ENCODE measurements at regions of chr2 and their contacts with region 1.

Region 1: GRCh38 chr2:10122386-10123280 is at the start of gene RRM2:
- DNase-seq: peak; percentile 91
- ATAC-seq: peak; percentile 81
- H3K4me3 ChIP-seq: peak within 1 kb of the TSS; percentile 86 to 96
- H3K27ac ChIP-seq: peak within 1 kb of the TSS; percentile 80
- H3K4me1 ChIP-seq: peaks cover 18 to 45% of the 10 kb centered on the region in 2 experiments; a peak in 3 of 4 replicates
- H3K27me3 ChIP-seq: no peaks in the 10 kb centered on the region
- CTCF ChIP-seq: no peak
- POLR2A ChIP-seq: peak; percentile 95
- RAD21 ChIP-seq: no peak
- total RNA-seq, gene RRM2: 330 TPM

Region 2: DNA sequence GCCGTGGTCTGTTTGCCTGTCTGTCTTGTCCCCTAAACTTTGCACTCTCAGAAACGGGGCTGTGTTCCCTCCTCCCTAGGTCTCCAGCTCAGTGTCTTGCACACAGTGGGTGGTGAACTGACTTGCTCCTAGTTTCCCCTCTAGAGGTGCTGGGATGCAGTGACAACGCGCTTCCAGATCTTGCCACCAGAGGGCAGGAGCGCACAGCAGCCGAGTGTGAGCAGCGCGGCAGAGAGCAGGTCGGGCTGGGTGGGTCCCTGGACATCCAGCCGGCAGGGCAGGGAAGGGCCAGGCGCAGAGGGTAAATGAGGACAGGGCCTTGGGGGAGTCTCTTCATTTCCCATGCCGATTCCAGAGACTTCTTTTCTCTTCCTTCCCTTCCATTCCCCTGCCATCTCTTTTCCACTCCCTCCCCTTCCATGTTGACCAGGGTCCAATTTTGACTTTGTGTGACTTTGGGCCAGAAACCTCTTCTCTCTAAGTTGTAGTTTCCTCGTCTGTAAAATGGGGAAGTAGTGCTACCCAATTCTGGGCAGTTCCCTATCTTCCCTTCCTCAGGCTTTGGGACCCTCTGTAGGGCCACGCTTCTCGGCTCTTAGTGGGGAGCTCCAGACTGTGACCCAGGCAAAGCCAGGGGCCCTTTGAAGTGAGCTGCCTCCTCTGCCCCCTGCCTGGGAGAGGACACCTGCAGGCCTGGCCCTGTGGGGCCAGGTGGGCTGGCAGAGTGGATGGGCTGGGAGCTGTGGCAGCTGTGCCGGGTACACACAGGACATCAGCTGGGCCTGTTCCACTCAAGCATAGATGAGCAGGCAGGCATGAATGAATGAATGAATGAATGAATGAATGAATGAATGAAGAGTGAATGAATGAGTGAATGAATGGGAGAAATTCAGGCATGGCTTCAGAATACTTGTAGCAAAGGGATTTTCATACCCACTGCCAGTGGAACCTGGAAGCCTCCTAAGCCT is 322.7 kb before region 1 on chr2:
- CTCF ChIA-PET with region 1: no interaction called
- POLR2A ChIA-PET with region 1: no interaction called
- RAD21 ChIA-PET with region 1: no interaction called
- intact Hi-C with region 1: loop called (anchors 2 kb)
- DNase-seq: peak; percentile 72
- ATAC-seq: peak; percentile 84
- H3K4me3 ChIP-seq: no peak overlapping the region
- H3K27ac ChIP-seq: peak overlapping the region; percentile 75; the same call in 1 of the 2 replicates
- H3K4me1 ChIP-seq: peaks cover 31 to 48% of the 10 kb centered on the region in 2 experiments
- H3K27me3 ChIP-seq: no peaks in the 10 kb centered on the region
- CTCF ChIP-seq: peak in 2 of 3 experiments; percentile 97 to 99; a peak in 4 of 6 replicates
- POLR2A ChIP-seq: no peak
- RAD21 ChIP-seq: no peak

Region 3: DNA sequence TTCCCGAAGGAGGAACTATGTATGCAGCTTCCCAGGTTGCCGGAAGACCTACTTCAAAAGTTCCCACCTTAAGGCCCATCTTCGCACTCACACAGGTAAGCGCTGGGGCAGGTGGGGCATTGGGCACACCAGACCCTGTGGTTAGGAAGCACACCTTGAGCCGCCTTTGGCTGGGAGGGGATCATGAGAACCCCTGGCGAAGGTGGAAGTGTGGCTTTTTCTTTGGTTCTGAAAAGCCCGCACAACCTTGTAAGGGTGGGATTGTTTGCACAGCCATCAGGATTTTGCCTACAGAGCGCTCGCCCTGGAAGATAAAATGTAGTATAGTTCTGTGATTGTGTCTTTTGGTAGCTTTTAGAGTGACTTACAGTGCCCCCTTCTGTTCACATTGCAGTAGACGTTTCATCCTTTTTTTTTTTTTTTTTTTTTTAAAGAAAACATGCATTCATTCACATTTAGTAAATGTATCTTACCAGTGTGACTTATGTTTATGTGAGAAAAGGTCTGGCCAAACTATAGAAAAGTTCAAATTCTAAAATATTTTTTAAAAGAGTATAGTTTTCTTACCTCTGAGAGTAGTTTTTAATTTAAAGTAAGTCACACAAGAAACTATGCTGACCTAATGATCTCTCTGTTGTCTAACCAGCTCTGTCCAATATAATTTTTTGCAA is 74.0 kb before region 1 on chr2:
- CTCF ChIA-PET with region 1: no interaction called
- POLR2A ChIA-PET with region 1: no interaction called
- RAD21 ChIA-PET with region 1: no interaction called
- intact Hi-C with region 1: no loop called
- DNase-seq: peak; percentile 10
- ATAC-seq: no peak
- H3K4me3 ChIP-seq: no peak overlapping the region
- H3K27ac ChIP-seq: no peak overlapping the region
- H3K4me1 ChIP-seq: peaks cover 3 to 9% of the 10 kb centered on the region in 2 experiments; a peak in 1 of 4 replicates
- H3K27me3 ChIP-seq: no peaks in the 10 kb centered on the region
- CTCF ChIP-seq: peak; percentile 48 to 79 (median 75)
- POLR2A ChIP-seq: no peak
- RAD21 ChIP-seq: peak; percentile 84

Region 4: GRCh38 chr2:10072656-10073480 is 49.8 kb before region 1 on chr2:
- CTCF ChIA-PET with region 1: interaction called, 22 read pairs
- POLR2A ChIA-PET with region 1: no interaction called
- RAD21 ChIA-PET with region 1: interaction called in 1 of 2 experiments, 6 read pairs
- intact Hi-C with region 1: no loop called
- DNase-seq: peak; percentile 69
- ATAC-seq: peak; percentile 98
- H3K4me3 ChIP-seq: no peak overlapping the region
- H3K27ac ChIP-seq: no peak overlapping the region
- H3K4me1 ChIP-seq: peaks cover 0 to 8% of the 10 kb centered on the region in 2 experiments; a peak in 2 of 4 replicates
- H3K27me3 ChIP-seq: no peaks in the 10 kb centered on the region
- CTCF ChIP-seq: peak; percentile 86 to 93 (median 92)
- POLR2A ChIP-seq: no peak
- RAD21 ChIP-seq: peak; percentile 92

Region 5: DNA sequence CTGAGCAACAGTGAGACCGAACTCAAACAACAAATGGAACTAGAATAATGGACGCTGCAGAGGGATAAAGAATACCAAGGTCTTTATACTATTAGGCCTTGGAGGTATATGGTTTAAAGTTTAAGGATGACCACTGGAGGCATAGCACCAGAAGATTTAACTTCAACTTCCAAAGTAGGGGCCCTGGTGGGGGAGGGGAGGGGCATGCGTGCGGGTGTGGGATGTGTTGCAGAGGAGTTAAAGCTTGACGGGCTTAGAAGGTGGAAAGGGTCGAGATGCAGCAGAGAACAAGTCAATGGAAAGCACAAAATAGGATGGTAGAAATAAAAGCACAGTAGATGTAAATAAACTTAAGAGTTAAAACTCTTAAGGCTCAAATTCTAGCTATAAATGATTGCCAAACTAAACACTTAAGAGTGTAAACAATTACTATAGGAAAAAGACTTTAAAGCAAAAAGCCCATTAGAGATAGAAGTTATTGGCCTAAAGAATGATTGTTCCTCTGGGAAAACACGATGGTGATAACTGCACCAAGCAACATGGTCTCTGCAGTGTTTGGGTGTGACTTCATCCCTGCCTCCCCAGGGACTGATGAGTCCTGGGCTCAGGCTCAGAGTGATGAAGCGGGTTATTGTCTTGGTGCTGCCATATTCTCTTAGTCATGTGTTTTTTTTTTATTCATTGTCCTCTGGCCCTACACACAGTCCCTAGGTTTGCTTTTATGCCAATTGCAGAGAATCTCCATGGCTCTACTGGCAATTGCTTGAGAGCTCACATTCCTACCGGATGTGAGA is 12.9 kb after region 1 on chr2:
- CTCF ChIA-PET with region 1: interaction called, 4 read pairs
- POLR2A ChIA-PET with region 1: interaction called, 12 read pairs
- RAD21 ChIA-PET with region 1: no interaction called
- intact Hi-C with region 1: no loop called
- DNase-seq: no peak
- ATAC-seq: peak; percentile 15
- H3K4me3 ChIP-seq: no peak overlapping the region
- H3K27ac ChIP-seq: peak overlapping the region; percentile 15; the same call in 1 of the 2 replicates
- H3K4me1 ChIP-seq: peaks cover 9 to 42% of the 10 kb centered on the region in 2 experiments; a peak in 3 of 4 replicates
- H3K27me3 ChIP-seq: no peaks in the 10 kb centered on the region
- CTCF ChIP-seq: no peak
- POLR2A ChIP-seq: no peak
- RAD21 ChIP-seq: no peak

Region 6: DNA sequence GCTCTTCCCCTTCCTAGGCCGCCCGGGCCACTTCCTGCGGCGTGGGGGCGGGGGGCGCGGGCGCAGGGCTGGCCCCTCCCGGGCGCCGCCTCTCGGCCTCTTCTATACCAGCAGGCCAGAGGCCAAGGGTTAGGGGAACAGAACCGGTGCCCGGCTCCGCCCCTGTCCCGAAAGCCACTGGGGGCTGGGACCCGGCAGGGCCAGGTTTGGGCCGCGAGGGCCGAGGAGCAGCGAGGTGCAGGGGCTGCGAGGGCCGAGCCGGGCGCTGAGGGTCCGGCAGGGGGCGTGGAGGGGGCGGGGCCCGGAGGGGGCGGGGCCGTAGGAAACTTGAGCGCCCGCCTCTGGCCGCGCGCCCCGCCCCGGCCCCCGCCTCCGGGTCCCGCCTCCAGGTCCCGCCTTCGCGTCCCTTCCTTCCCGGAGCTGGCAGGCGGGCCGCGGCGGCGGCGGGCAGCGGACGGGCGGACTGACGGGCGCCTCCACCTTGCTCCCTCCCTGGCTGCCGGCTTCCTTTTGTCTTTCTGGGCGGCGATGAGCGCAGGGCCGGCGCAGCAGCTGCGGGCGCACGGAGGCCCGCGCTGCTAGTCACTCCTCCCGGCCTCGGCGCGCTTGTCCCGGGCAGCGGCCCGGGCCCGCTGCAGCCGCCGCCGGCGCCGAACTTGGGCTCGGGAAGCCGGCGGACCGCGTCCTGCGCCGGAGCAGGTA is 180.0 kb after region 1 on chr2 and contains the start of gene HPCAL1:
- CTCF ChIA-PET with region 1: no interaction called
- POLR2A ChIA-PET with region 1: no interaction called
- RAD21 ChIA-PET with region 1: no interaction called
- intact Hi-C with region 1: loop called (anchors 10 kb)
- DNase-seq: peak; percentile 36
- ATAC-seq: peak; percentile 78
- H3K4me3 ChIP-seq: peak within 1 kb of the TSS; percentile 72 to 96
- H3K27ac ChIP-seq: peak within 1 kb of the TSS; percentile 68
- H3K4me1 ChIP-seq: peaks cover 22 to 71% of the 10 kb centered on the region in 2 experiments
- H3K27me3 ChIP-seq: no peaks in the 10 kb centered on the region
- CTCF ChIP-seq: peak in 2 of 3 experiments; percentile 47 to 58; a peak in 4 of 6 replicates
- POLR2A ChIP-seq: peak; percentile 59
- RAD21 ChIP-seq: no peak
- total RNA-seq, gene HPCAL1: 111 TPM

Region 7: GRCh38 chr2:10659898-10660568 is 537.4 kb after region 1 on chr2:
- CTCF ChIA-PET with region 1: no interaction called
- POLR2A ChIA-PET with region 1: no interaction called
- RAD21 ChIA-PET with region 1: no interaction called
- intact Hi-C with region 1: loop called (anchors 1 kb)
- DNase-seq: peak; percentile 49
- ATAC-seq: peak; percentile 86
- H3K4me3 ChIP-seq: no peak overlapping the region
- H3K27ac ChIP-seq: no peak overlapping the region
- H3K4me1 ChIP-seq: peaks cover 7 to 34% of the 10 kb centered on the region in 2 experiments; a peak in 3 of 4 replicates
- H3K27me3 ChIP-seq: no peaks in the 10 kb centered on the region
- CTCF ChIP-seq: peak; percentile 51 to 87 (median 83)
- POLR2A ChIP-seq: no peak
- RAD21 ChIP-seq: peak; percentile 90

Region 8: DNA sequence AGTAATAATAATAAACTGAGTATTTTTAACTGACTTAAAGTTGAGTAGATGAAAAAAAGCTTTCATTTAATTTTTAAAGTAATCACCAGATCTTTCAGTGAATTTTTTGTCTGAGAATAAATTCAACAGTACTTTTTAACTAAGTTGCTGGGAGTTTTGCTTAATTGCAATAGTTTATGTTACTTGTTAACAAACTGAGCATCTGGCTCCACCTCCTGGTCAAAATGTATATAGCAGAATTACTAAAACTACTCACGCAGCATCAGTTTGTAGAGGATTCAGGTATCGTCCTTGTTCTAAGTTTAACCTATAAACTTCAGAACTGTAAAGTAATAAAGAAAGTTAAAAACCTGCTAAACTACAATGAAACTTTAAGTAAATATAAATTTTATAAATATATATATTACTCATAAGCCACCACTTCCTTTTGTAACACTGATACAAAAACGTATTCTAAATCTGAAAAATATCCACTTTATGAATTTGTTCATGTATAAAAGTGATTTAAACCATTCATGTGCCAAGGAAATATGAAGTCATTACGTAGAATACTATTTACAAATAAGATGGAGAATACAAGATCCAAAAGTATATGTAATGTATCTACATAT is 545.9 kb after region 1 on chr2:
- CTCF ChIA-PET with region 1: no interaction called
- POLR2A ChIA-PET with region 1: no interaction called
- RAD21 ChIA-PET with region 1: no interaction called
- intact Hi-C with region 1: loop called (anchors 2 kb)
- DNase-seq: peak; percentile 57
- ATAC-seq: peak; percentile 52; the same call in 1 of the 2 replicates
- H3K4me3 ChIP-seq: no peak overlapping the region
- H3K27ac ChIP-seq: no peak overlapping the region
- H3K4me1 ChIP-seq: no peaks in the 10 kb centered on the region
- H3K27me3 ChIP-seq: no peaks in the 10 kb centered on the region
- CTCF ChIP-seq: peak; percentile 43 to 73 (median 51); a peak in 5 of 6 replicates
- POLR2A ChIP-seq: no peak
- RAD21 ChIP-seq: peak; percentile 67

Measured in HCT116 (cell line).